H1 (cell line): ENCODE measurements at regions of chr14 and their contacts with region 1.

Region 1: GRCh38 chr14:35438910-35439713 is 34.6 kb upstream of the NFKBIA start:
- DNase-seq: no peak
- H3K4me3 ChIP-seq: no peak overlapping the region
- H3K27ac ChIP-seq: no peak overlapping the region
- H3K4me1 ChIP-seq: no peaks in the 10 kb centered on the region
- H3K27me3 ChIP-seq: no peaks in the 10 kb centered on the region
- CTCF ChIP-seq: peak in 2 of 3 experiments; percentile 49 to 63; a peak in 2 of 4 replicates
- EP300 ChIP-seq: no peak
- POLR2A ChIP-seq: no peak
- RAD21 ChIP-seq: peak; percentile 53 to 62

Region 2: DNA sequence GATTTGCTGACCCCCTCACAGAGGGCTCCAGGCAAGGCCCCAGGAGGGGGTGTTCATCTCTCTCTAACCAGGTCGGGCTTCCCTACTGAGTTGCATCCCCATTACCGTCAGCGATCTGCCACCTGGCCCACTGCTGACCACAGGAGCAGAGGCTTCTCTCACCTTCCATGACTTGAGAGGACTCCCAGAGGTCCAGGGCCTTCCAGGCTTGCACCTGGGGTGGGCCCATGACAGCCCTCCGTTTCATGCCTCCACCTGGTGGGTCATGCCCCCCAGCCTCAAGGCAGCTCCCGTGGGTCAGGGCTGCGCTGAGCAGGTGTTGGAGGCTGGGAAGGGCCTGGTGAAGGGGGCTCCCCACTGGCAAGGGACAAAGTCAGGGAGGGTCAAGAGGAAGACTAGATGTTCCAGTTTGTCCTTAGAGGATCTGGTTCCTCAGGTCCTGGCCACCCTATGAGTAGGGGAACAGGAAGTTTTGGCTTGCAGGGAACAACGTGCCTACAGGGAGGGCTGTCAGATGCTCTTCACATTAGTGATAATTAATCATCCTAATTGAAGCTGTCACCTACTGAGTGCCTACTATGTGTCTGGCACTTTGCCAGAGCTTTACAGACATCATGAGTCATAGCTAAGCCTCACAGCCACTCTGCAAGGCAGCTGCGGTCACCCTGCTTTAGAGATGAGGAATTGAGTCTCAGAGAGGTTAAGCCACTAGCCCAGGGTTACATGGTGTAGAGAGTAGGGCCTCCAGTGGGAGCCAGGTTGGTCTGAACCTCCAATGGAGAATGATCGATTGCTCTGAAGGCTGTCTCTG is 48.3 kb before region 1 on chr14:
- CTCF ChIA-PET with region 1: no interaction called
- POLR2A ChIA-PET with region 1: no interaction called
- DNase-seq: no peak
- H3K4me3 ChIP-seq: no peak overlapping the region
- H3K27ac ChIP-seq: no peak overlapping the region
- H3K4me1 ChIP-seq: peaks cover 0 to 3% (median under 1%) of the 10 kb centered on the region in 4 experiments; a peak in 5 of 7 replicates
- H3K27me3 ChIP-seq: no peaks in the 10 kb centered on the region
- CTCF ChIP-seq: no peak
- EP300 ChIP-seq: no peak
- POLR2A ChIP-seq: no peak
- RAD21 ChIP-seq: no peak

Region 3: GRCh38 chr14:35470755-35471154 is 31.6 kb after region 1 on chr14:
- CTCF ChIA-PET with region 1: interaction called, 10 read pairs
- POLR2A ChIA-PET with region 1: no interaction called
- DNase-seq: no peak
- H3K4me3 ChIP-seq: no peak overlapping the region
- H3K27ac ChIP-seq: no peak overlapping the region
- H3K4me1 ChIP-seq: no peaks in the 10 kb centered on the region
- H3K27me3 ChIP-seq: no peaks in the 10 kb centered on the region
- CTCF ChIP-seq: no peak
- EP300 ChIP-seq: no peak
- POLR2A ChIP-seq: no peak
- RAD21 ChIP-seq: no peak

Region 4: GRCh38 chr14:35519986-35520385 is 80.9 kb after region 1 on chr14:
- CTCF ChIA-PET with region 1: no interaction called
- POLR2A ChIA-PET with region 1: no interaction called
- DNase-seq: no peak
- H3K4me3 ChIP-seq: no peak overlapping the region
- H3K27ac ChIP-seq: no peak overlapping the region
- H3K4me1 ChIP-seq: no peaks in the 10 kb centered on the region
- H3K27me3 ChIP-seq: no peaks in the 10 kb centered on the region
- CTCF ChIP-seq: no peak
- EP300 ChIP-seq: no peak
- POLR2A ChIP-seq: no peak
- RAD21 ChIP-seq: no peak

Region 5: GRCh38 chr14:35653045-35653444 is 213.9 kb after region 1 on chr14:
- CTCF ChIA-PET with region 1: interaction called, 11 read pairs
- POLR2A ChIA-PET with region 1: no interaction called
- DNase-seq: no peak
- H3K4me3 ChIP-seq: no peak overlapping the region
- H3K27ac ChIP-seq: no peak overlapping the region
- H3K4me1 ChIP-seq: no peaks in the 10 kb centered on the region
- H3K27me3 ChIP-seq: no peaks in the 10 kb centered on the region
- CTCF ChIP-seq: no peak
- EP300 ChIP-seq: no peak
- POLR2A ChIP-seq: no peak
- RAD21 ChIP-seq: no peak

Region 6: DNA sequence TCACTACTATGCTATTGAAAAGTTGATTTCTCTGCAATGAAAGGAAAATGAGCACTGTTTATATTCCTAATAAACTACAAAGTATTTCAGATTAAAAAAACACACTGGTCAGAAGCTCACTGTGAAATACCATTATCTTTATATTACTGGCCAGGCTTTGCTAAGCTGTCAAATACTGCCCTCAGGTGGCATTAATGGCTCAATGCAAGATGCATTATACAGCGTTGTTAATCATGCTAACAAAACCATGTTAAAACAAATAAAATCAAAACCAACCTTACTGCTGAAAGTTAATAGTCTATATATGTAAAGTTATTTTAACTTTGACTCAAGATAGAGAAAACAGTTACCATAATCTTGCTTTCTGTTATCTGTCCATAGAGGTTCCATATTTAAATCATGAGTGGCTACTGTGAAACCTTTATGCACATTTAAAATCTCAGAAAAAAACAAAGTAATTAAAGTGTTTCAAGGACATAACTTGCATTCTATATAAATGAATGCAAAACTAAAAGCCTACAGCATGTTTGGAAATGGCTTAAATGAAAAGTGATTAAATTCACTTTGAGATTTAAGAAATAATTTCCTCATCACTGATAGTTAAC is 248.3 kb after region 1 on chr14:
- CTCF ChIA-PET with region 1: interaction called, 12 read pairs
- POLR2A ChIA-PET with region 1: no interaction called
- DNase-seq: no peak
- H3K4me3 ChIP-seq: no peak overlapping the region
- H3K27ac ChIP-seq: no peak overlapping the region
- H3K4me1 ChIP-seq: no peaks in the 10 kb centered on the region
- H3K27me3 ChIP-seq: no peaks in the 10 kb centered on the region
- CTCF ChIP-seq: peak in 2 of 3 experiments; percentile 72 to 75; a peak in 3 of 4 replicates
- EP300 ChIP-seq: no peak
- POLR2A ChIP-seq: no peak
- RAD21 ChIP-seq: peak; percentile 96 to 97